ENCODE measurements at regions of chr15 and their contacts with region 1.

Region 1: DNA sequence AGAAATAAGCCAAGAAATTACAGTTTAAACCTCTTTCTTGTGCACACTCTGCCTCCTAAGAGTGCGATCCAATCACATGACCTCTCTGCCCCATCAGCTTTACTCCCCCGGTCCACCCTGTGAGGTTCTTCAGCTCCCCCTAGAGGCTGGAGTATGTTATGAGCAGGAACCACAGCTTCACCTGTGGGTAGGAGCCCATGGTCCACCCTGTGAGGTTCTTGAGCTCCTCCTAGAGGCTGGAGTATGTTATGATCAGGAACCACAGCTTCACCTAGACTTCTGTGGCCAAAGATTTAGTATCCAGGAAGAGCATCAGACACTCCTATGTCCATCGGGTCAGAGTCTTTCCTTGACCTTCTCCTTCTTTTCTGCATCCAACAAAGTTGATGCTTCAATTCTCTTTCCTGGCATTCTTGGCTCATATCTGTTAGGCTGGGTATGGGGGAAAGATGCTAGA is 163.9 kb downstream of the MINAR1 start:
- DNase-seq: peak; percentile 80
- ATAC-seq: peak; percentile 100
- H3K4me3 Mint-ChIP-seq: no peak overlapping the region
- H3K27ac Mint-ChIP-seq: no peak overlapping the region
- H3K4me1 Mint-ChIP-seq: no peaks in the 10 kb centered on the region
- H3K27me3 Mint-ChIP-seq: peaks cover 25% of the 10 kb centered on the region

Region 2: DNA sequence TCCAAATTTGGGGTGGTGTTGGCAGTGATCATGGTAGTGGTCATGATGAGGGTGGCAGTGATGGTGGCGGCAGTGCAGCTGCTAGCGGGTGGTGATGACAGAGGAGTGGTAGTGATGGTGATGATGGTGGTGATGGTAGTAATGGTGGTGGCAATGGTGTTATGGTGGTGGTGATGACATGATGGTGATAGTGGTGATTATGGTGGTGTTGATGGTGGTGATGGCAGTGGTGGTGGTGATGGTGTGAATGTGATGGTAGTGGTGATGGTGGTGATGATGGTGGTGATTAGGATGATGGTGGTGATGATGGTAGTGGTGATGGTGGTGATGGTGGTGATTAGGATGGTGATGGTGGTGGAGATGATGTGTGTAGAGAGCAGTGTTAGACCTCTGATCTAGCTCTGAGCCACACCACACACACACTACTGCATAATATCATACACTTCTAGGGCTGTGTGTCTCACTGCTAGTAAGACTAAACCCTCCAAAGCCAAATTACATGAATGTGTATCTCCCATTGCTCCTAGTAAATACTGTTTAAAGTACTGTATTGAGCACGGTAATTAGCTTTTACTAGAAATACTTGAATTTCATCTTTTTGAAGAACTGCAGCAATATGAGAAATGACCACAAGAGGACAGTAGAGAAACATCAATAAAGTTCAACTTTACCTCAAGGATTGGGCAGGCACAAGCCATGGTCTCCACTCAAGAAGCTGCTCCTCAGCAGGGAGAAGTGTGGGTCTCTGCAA is 256.3 kb before region 1 on chr15:
- CTCF ChIA-PET with region 1: interaction called, 13 read pairs
- POLR2A ChIA-PET with region 1: no interaction called
- intact Hi-C with region 1: loop called (anchors 1 to 5 kb)
- DNase-seq: peak; percentile 14
- ATAC-seq: no peak
- H3K4me3 Mint-ChIP-seq: no peak overlapping the region
- H3K27ac Mint-ChIP-seq: no peak overlapping the region
- H3K4me1 Mint-ChIP-seq: no peaks in the 10 kb centered on the region
- H3K27me3 Mint-ChIP-seq: no peaks in the 10 kb centered on the region

Region 3: GRCh38 chr15:79582650-79583049 is 13.4 kb before region 1 on chr15:
- CTCF ChIA-PET with region 1: interaction called, 12 read pairs
- POLR2A ChIA-PET with region 1: no interaction called
- intact Hi-C with region 1: no loop called
- DNase-seq: no peak
- ATAC-seq: no peak
- H3K4me3 Mint-ChIP-seq: no peak overlapping the region
- H3K27ac Mint-ChIP-seq: no peak overlapping the region
- H3K4me1 Mint-ChIP-seq: no peaks in the 10 kb centered on the region
- H3K27me3 Mint-ChIP-seq: peaks cover 19% of the 10 kb centered on the region

Region 4: GRCh38 chr15:79606831-79607355 is 10.8 kb after region 1 on chr15:
- CTCF ChIA-PET with region 1: interaction called, 14 read pairs
- POLR2A ChIA-PET with region 1: no interaction called
- intact Hi-C with region 1: no loop called
- DNase-seq: no peak
- ATAC-seq: no peak
- H3K4me3 Mint-ChIP-seq: no peak overlapping the region
- H3K27ac Mint-ChIP-seq: no peak overlapping the region
- H3K4me1 Mint-ChIP-seq: no peaks in the 10 kb centered on the region
- H3K27me3 Mint-ChIP-seq: peaks cover 11% of the 10 kb centered on the region

Region 5: DNA sequence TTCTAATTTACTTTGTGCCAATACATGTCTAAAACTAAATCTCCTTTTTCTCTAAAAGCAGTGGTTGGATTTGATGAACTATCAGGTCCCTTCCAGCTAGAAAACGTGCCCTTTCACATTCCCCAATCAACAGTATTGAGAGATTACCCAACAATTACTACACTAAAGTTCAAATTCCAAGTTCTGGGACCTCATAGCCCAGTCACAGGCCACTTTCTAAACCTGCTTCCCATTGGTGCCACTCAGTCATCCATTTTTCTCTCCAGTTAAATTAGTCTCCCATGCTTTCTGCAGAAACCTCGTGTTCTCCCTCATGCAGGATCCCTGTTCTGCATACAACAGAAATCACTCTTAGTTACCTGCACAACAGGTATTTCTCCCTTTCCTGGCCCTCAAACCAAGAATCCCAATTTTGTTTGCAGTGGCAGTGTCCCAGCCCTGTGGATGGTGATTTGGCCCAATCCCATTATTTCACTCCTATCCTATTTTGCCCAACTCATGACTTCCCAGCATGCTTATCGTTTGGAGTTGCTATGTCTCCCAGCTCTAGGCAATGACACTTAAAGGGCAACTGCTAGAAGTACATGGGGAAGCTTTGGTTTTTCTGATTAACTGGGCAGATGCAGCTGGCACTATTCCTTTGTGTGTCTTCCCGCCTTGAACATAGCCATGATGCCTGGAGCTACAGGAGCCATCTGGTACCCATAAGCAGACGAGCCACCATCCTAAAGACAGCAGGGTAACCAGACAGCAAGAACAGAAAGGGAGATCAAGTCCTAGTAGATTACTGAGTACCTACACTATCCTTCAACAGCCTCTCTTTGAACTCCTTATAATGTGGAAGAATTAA is 60.3 kb after region 1 on chr15:
- CTCF ChIA-PET with region 1: no interaction called
- POLR2A ChIA-PET with region 1: no interaction called
- intact Hi-C with region 1: no loop called
- DNase-seq: no peak
- ATAC-seq: no peak
- H3K4me3 Mint-ChIP-seq: no peak overlapping the region
- H3K27ac Mint-ChIP-seq: no peak overlapping the region
- H3K4me1 Mint-ChIP-seq: no peaks in the 10 kb centered on the region
- H3K27me3 Mint-ChIP-seq: peaks cover 25% of the 10 kb centered on the region

Measured in activated CD4-positive, alpha-beta T cell treated with anti-CD3 and anti-CD28 coated beads for 36 hours (primary cell).